ENCODE measurements at regions of chr14 and their contacts with region 1.

Region 1: DNA sequence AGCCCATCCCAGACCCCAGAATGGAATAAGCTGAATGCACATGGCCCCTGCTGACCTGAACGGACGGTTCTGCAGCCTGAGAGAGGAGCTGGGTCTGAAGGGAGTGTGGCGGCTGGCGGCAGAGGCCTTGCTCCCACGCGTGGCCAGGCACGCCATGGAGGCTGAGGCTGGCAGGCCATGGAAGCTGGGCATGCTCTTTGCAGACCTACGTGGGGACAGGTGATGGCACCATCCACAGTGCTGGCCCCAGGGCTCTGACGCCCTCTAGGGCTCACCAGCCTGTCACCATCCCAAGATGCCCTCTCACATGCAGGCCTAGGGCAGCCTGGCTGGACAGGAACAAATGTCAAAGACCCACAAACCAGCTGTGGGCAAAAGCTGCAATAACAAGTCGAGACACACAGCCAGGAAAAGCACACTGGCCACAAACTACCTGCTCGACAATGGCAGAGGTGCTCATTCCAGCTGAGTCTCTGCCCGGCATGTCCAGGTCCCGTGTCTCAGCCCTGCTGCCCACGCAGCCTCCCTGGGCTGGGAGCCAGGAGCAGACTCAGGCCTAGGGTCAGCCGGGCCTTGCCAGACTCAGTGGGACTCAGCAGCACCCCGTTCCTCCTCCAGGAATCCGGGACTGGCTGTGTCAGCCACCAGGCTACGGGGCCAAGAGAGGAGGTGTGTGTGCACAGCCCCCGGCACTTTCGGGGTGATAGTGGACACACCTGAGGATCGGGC is 19.7 kb downstream of the BTBD6 start:
- DNase-seq: peak; percentile 15
- H3K4me3 ChIP-seq: no peak overlapping the region
- H3K27ac ChIP-seq: no peak overlapping the region
- H3K4me1 ChIP-seq: peaks cover 9% of the 10 kb centered on the region
- H3K27me3 ChIP-seq: no peaks in the 10 kb centered on the region
- CTCF ChIP-seq: peak in 1 of 2 donors; percentile 21

Region 2: DNA sequence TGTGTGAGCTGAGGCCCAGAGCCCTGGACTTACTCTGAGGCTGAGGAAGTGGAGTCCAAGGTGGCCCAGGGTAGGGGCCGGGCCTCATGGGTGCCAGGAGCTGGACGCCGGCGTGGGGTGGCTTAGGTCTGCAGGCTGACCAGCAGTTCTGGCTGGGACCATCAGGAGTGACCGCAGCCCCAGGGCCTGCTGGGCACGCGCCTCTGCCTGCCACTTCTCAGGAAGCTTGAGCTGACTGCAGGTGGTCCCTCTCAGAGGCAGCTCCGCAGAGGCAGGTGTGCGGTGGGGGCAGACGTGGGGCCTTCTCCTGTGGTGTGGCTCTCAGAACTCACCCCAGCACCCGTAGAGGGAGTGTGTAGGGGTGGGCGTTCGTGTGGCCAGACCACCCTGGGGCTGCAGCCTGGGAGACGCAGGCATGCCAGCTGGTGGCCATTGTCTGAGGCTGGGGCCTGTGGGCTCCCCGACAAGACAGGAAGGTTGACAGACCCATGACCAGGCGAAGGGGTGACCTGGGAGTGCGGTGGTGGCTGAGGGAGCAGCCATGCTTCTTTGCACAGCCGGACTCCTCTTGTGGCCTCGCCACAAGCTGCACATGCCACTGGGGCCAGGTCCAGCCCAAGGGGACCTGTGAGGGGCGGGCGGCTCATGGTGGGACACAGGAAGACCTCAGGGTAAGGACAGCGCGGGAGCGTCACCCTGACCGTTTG is 90.3 kb after region 1 on chr14:
- CTCF ChIA-PET with region 1: no interaction called
- dilution Hi-C with region 1: loop called (anchors 5 kb)
- in situ Hi-C with region 1: no loop called
- intact Hi-C with region 1: no loop called
- DNase-seq: no peak
- H3K4me3 ChIP-seq: no peak overlapping the region
- H3K27ac ChIP-seq: no peak overlapping the region
- H3K4me1 ChIP-seq: no peaks in the 10 kb centered on the region
- H3K27me3 ChIP-seq: no peaks in the 10 kb centered on the region
- CTCF ChIP-seq: no peak